ENCODE measurements at regions of chr3 and their contacts with region 1.

Region 1: DNA sequence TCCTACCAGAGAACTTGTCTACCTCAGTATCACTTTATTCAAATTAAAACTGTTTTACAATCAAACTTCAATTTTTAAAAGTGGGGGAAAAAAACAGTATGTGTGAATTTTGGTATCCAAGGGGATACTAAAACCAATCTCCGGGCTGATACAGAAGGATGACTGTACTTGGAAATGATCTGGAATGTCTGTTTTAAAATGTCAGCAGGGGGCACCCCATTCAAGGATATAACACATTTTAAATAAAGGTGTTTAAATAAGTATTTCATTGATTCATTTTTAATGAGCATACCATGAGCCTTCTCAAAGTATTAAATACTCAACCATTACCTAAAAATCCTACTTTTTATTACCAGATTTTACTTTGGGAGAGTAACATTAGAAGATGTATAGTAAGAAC is 67.9 kb downstream of the ULK4 start:
- DNase-seq: peak; percentile 3 to 19 (median 16)
- H3K4me3 ChIP-seq: no peak overlapping the region
- H3K4me3 Mint-ChIP-seq: no peak overlapping the region
- H3K27ac ChIP-seq: no peak overlapping the region
- H3K27ac Mint-ChIP-seq: no peak overlapping the region
- H3K4me1 ChIP-seq: no peaks in the 10 kb centered on the region
- H3K4me1 Mint-ChIP-seq: no peaks in the 10 kb centered on the region
- H3K27me3 ChIP-seq: no peaks in the 10 kb centered on the region
- H3K27me3 Mint-ChIP-seq: peaks cover 0 to 1% (median 0%) of the 10 kb centered on the region in 3 donors
- CTCF ChIP-seq: peak; percentile 49

Region 2: GRCh38 chr3:40649346-40649745 is 1244.6 kb before region 1 on chr3:
- intact Hi-C with region 1: no loop called
- DNase-seq: no peak
- H3K4me3 ChIP-seq: no peak overlapping the region
- H3K4me3 Mint-ChIP-seq: no peak overlapping the region
- H3K27ac ChIP-seq: no peak overlapping the region
- H3K27ac Mint-ChIP-seq: no peak overlapping the region
- H3K4me1 ChIP-seq: no peaks in the 10 kb centered on the region
- H3K4me1 Mint-ChIP-seq: no peaks in the 10 kb centered on the region
- H3K27me3 ChIP-seq: no peaks in the 10 kb centered on the region
- H3K27me3 Mint-ChIP-seq: peaks cover 0 to 4% (median 3%) of the 10 kb centered on the region in 3 donors
- CTCF ChIP-seq: no peak

Region 3: GRCh38 chr3:42090973-42091731 is 197.2 kb after region 1 on chr3 and contains the start of gene TRAK1:
- intact Hi-C with region 1: loop called in 1 of 2 experiments (anchors 10 kb)
- DNase-seq: no peak
- H3K4me3 ChIP-seq: no peak within 1 kb of the TSS
- H3K4me3 Mint-ChIP-seq: no peak within 1 kb of the TSS
- H3K27ac ChIP-seq: peak within 1 kb of the TSS in 1 of 2 donors; percentile 43
- H3K27ac Mint-ChIP-seq: peak within 1 kb of the TSS in 5 of 7 donors; percentile 31 to 78 (median 64)
- H3K4me1 ChIP-seq: no peaks in the 10 kb centered on the region
- H3K4me1 Mint-ChIP-seq: peaks cover 3% of the 10 kb centered on the region
- H3K27me3 ChIP-seq: no peaks in the 10 kb centered on the region
- H3K27me3 Mint-ChIP-seq: peaks cover 0 to 1% (median 0%) of the 10 kb centered on the region in 3 donors
- CTCF ChIP-seq: no peak
- polyA plus RNA-seq, gene TRAK1: 6.6 to 40.8 (median 7.0) TPM

Region 4: DNA sequence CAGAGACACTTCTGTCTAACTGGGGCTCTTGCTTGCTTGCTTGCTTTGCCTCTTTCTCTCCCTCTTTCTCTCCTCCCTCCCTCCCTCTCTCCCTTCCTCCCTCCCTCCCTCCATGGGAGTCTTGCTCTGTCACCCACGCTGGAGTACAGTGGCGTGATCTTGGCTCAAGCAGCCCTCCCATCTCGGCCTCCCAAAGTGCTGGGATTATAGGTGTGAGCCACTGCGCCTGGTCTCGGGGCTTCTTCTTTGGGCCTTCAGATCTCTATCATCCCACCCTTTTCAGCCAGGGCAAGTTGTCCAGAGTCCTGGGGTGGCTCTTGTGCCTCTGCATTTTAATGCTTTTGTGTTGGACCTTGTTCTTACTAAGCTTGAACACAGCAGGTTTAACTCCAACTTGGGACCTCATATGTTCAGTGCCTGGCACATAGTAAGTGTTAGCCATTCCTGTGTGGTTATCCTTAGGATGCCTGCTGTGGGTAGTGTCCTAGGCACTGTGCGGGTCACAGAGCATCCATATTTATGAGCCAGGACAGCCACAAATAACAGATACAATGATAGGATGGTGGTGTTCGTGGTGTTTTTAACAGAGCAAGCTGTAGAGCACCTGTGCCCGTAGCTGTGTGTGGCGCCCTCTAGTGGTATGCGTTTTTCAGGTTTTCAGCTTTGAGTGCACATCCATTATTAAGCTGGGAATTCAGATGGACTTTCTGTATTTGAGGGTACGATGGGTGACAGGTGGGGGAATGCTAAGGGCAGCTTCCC is 296.9 kb after region 1 on chr3:
- intact Hi-C with region 1: loop called in 1 of 2 experiments (anchors 10 kb)
- DNase-seq: peak; percentile 30 to 55 (median 31)
- H3K4me3 ChIP-seq: no peak overlapping the region
- H3K4me3 Mint-ChIP-seq: no peak overlapping the region
- H3K27ac ChIP-seq: peak overlapping the region in 1 of 2 donors; percentile 87
- H3K27ac Mint-ChIP-seq: peak overlapping the region in 2 of 7 donors; percentile 10 to 55
- H3K4me1 ChIP-seq: peaks cover 27 to 30% of the 10 kb centered on the region in 2 donors
- H3K4me1 Mint-ChIP-seq: peaks cover 27% of the 10 kb centered on the region
- H3K27me3 ChIP-seq: no peaks in the 10 kb centered on the region
- H3K27me3 Mint-ChIP-seq: peaks cover 0 to 1% (median 0%) of the 10 kb centered on the region in 3 donors
- CTCF ChIP-seq: peak; percentile 84

Region 5: DNA sequence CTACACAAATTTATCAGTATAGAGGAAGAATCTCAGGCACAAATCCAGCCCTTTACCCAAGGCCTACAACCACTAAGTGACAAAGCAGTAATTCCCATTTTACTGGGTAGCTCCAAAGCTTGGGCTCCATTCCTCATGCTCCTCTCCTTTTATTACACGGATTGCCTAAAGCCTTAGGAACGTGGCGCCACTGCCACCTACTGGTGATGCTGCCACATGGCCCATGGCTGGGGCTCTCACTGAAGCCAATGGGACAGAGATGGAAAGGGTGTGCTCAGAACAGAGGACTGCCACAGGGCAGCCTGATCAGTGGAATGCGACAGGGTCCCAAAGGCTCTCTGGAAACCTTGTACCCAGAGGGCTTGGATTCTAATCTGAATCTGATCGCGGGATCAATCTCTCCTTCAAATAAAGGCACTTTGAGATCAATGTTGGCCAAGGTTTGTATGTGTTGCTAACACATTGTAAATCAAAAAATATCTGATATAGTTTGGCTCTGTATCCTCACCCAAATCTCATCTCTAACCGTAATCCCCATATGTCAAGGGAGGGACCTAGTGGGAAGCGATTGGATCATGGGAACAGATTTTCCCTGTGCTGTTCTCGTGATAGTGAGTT is 550.0 kb after region 1 on chr3:
- intact Hi-C with region 1: loop called in 1 of 2 experiments (anchors 5 kb)
- DNase-seq: peak; percentile 53 to 74 (median 62)
- H3K4me3 ChIP-seq: no peak overlapping the region
- H3K4me3 Mint-ChIP-seq: no peak overlapping the region
- H3K27ac ChIP-seq: no peak overlapping the region
- H3K27ac Mint-ChIP-seq: no peak overlapping the region
- H3K4me1 ChIP-seq: no peaks in the 10 kb centered on the region
- H3K4me1 Mint-ChIP-seq: no peaks in the 10 kb centered on the region
- H3K27me3 ChIP-seq: peaks cover 0 to 4% of the 10 kb centered on the region in 2 donors
- H3K27me3 Mint-ChIP-seq: peaks cover 3 to 29% (median 20%) of the 10 kb centered on the region in 3 donors
- CTCF ChIP-seq: peak; percentile 98

Region 6: GRCh38 chr3:42547401-42547945 is 653.5 kb after region 1 on chr3:
- intact Hi-C with region 1: loop called in 1 of 2 experiments (anchors 10 kb)
- DNase-seq: peak; percentile 38 to 52 (median 52)
- H3K4me3 ChIP-seq: no peak overlapping the region
- H3K4me3 Mint-ChIP-seq: no peak overlapping the region
- H3K27ac ChIP-seq: no peak overlapping the region
- H3K27ac Mint-ChIP-seq: no peak overlapping the region
- H3K4me1 ChIP-seq: peaks cover 5 to 9% of the 10 kb centered on the region in 2 donors
- H3K4me1 Mint-ChIP-seq: peaks cover 5% of the 10 kb centered on the region
- H3K27me3 ChIP-seq: no peaks in the 10 kb centered on the region
- H3K27me3 Mint-ChIP-seq: no peaks in the 10 kb centered on the region
- CTCF ChIP-seq: peak; percentile 97

Measured in CD14-positive monocyte (primary cell).